CD8-positive, alpha-beta memory T cell (primary cell): ENCODE measurements at regions of chr7 and their contacts with region 1.

Region 1: GRCh38 chr7:150753826-150754603 is 16.8 kb downstream of the GIMAP5 start:
- DNase-seq: no peak
- H3K4me3 ChIP-seq: peak overlapping the region; percentile 15
- H3K4me3 Mint-ChIP-seq: peak overlapping the region in 6 of 7 donors; percentile 33 to 66 (median 54)
- H3K27ac ChIP-seq: no peak overlapping the region
- H3K27ac Mint-ChIP-seq: peak overlapping the region; percentile 75 to 97 (median 88)
- H3K4me1 ChIP-seq: peaks cover 79% of the 10 kb centered on the region
- H3K4me1 Mint-ChIP-seq: peaks cover 65 to 82% (median 81%) of the 10 kb centered on the region in 3 donors
- H3K27me3 ChIP-seq: no peaks in the 10 kb centered on the region
- H3K27me3 Mint-ChIP-seq: peaks cover 0 to 3% of the 10 kb centered on the region in 2 donors

Region 2: DNA sequence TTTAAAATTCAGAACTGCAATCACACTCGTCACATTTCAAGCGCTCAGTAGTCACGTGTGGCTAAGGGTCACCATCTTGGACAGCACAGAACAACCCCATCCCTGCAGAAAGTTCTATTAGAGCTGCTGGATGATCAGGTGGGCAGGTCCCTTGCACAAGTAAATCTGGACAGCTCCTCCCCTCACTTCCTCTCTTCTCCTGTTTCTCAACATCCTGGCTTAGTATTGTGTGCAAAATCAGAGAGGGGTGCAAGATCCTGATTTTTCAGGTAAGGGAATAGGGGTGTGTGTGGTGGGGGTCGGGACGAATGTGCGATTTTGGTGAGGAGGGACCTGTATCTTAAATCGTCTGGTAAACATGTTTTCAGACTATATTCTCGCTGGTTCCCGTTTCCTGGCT is 186.8 kb before region 1 on chr7 and contains the start of gene GIMAP4:
- CTCF ChIA-PET with region 1: interaction called, 25 read pairs
- POLR2A ChIA-PET with region 1: interaction called, 5 read pairs
- DNase-seq: peak in 2 of 5 donors; percentile 36 to 56
- H3K4me3 ChIP-seq: peak within 1 kb of the TSS; percentile 90
- H3K4me3 Mint-ChIP-seq: peak within 1 kb of the TSS; percentile 97 to 100 (median 100)
- H3K27ac ChIP-seq: peak within 1 kb of the TSS; percentile 67
- H3K27ac Mint-ChIP-seq: peak within 1 kb of the TSS; percentile 86 to 99 (median 98)
- H3K4me1 ChIP-seq: peaks cover 74% of the 10 kb centered on the region
- H3K4me1 Mint-ChIP-seq: peaks cover 72 to 86% (median 85%) of the 10 kb centered on the region in 3 donors
- H3K27me3 ChIP-seq: no peaks in the 10 kb centered on the region
- H3K27me3 Mint-ChIP-seq: peaks cover 0 to 4% of the 10 kb centered on the region in 2 donors
- total RNA-seq, gene GIMAP4: 57.3 to 59.3 TPM

Region 3: GRCh38 chr7:150631866-150632864 is 121.8 kb before region 1 on chr7 and contains the start of gene GIMAP6:
- CTCF ChIA-PET with region 1: interaction called, 9 read pairs
- POLR2A ChIA-PET with region 1: interaction called, 11 read pairs
- DNase-seq: peak; percentile 10 to 59 (median 47)
- H3K4me3 ChIP-seq: peak within 1 kb of the TSS; percentile 67
- H3K4me3 Mint-ChIP-seq: peak within 1 kb of the TSS; percentile 95 to 100 (median 97)
- H3K27ac ChIP-seq: peak within 1 kb of the TSS; percentile 47
- H3K27ac Mint-ChIP-seq: peak within 1 kb of the TSS; percentile 90 to 98 (median 94)
- H3K4me1 ChIP-seq: peaks cover 67% of the 10 kb centered on the region
- H3K4me1 Mint-ChIP-seq: peaks cover 83 to 89% (median 87%) of the 10 kb centered on the region in 3 donors
- H3K27me3 ChIP-seq: no peaks in the 10 kb centered on the region
- H3K27me3 Mint-ChIP-seq: no peaks in the 10 kb centered on the region
- total RNA-seq, gene GIMAP6: 44.9 to 45.8 TPM

Region 4: DNA sequence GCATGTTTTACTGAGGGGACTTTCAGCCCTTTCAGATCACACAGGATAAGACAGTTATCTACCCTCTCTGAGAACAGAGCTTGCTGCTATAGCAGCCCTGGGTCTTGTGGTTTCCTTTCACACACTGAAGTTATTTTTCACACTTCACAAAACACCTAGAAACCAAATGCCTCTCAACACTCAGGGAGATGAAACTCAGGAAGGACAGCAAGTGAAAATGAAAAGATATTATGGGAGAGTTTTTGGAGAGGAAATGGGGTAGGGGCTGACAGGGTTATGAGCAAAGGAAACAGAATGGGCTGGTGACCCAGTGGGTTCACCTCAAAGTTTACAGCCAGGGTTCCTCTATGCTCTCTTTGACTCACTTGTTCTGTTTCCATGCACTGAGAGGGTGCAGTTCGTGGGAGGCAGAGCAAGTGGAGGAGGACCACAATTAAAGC is 85.5 kb before region 1 on chr7:
- CTCF ChIA-PET with region 1: interaction called, 14 read pairs
- POLR2A ChIA-PET with region 1: interaction called, 3 read pairs
- DNase-seq: peak; percentile 34 to 89 (median 78)
- H3K4me3 ChIP-seq: peak overlapping the region; percentile 26
- H3K4me3 Mint-ChIP-seq: peak overlapping the region; percentile 32 to 90 (median 78)
- H3K27ac ChIP-seq: peak overlapping the region; percentile 0
- H3K27ac Mint-ChIP-seq: peak overlapping the region; percentile 90 to 100 (median 98)
- H3K4me1 ChIP-seq: peaks cover 88% of the 10 kb centered on the region
- H3K4me1 Mint-ChIP-seq: peaks cover 87 to 99% (median 96%) of the 10 kb centered on the region in 3 donors
- H3K27me3 ChIP-seq: no peaks in the 10 kb centered on the region
- H3K27me3 Mint-ChIP-seq: no peaks in the 10 kb centered on the region

Region 5: DNA sequence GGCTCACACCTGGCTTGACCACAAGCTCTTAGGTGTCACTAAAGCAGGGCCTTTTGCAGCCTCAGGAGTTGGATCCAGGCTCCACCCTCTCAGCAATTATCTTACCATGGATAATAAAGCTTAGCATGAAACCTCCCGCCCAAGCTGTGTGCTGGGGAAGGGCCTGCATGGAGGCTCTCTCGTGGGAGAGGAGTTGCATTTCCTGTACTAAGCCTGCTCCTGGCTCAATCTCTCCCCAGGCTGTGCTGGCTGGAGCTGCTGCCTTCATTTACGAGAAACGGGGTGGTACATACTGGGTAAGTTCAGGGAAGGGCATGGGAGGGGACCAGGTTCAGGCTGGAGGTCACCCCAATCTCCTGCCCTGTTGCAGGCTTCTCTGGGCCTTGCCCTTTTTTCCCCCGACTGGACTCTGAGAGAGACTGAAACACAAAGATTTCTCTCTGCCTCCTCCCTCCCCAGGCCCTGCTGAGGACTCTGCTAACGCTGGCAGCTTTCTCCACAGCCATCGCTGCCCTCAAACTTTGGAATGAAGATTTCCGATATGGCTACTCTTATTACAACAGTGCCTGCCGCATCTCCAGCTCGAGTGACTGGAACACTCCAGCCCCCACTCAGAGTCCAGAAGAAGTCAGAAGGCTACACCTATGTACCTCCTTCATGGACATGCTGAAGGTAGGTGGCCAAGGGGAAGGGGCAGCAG is 49.3 kb after region 1 on chr7:
- CTCF ChIA-PET with region 1: no interaction called
- POLR2A ChIA-PET with region 1: no interaction called
- DNase-seq: no peak
- H3K4me3 ChIP-seq: no peak overlapping the region
- H3K4me3 Mint-ChIP-seq: peak overlapping the region in 1 of 7 donors; percentile 27
- H3K27ac ChIP-seq: no peak overlapping the region
- H3K27ac Mint-ChIP-seq: no peak overlapping the region
- H3K4me1 ChIP-seq: no peaks in the 10 kb centered on the region
- H3K4me1 Mint-ChIP-seq: peaks cover 0 to 23% (median 10%) of the 10 kb centered on the region in 3 donors
- H3K27me3 ChIP-seq: peaks cover 28% of the 10 kb centered on the region
- H3K27me3 Mint-ChIP-seq: peaks cover 60 to 79% of the 10 kb centered on the region in 2 donors